Dendritic cell treated with granulocyte-macrophage colony-stimulating factor and Interleukin-4, amounts not matched to agents 40 ng/mL and 50 ng/mL, for 4 days (primary cell): ENCODE measurements at regions of chr2 and their contacts with region 1.

Region 1: DNA sequence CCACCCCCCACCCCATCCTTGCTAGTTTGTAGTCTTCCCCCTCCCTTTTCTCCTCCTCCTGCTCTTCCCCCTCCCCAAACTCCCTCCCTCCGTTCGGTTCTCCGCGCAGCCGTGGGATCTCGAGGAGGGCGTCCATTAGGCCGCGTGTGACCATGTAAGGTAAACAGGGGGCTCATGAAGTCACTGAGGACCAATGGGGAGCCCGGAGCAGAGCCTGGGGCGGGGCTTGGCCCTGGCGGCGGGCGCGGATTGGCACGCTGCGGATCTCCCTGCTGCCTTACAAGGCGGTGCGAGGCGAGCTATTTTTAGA is 246 bp upstream of the KLF7 start:
- H3K4me3 Mint-ChIP-seq: peak overlapping the region; percentile 98
- H3K27ac Mint-ChIP-seq: peak overlapping the region; percentile 99
- H3K4me1 Mint-ChIP-seq: peaks cover 55% of the 10 kb centered on the region
- H3K27me3 Mint-ChIP-seq: no peaks in the 10 kb centered on the region

Region 2: GRCh38 chr2:207012463-207012862 is 153.5 kb before region 1 on chr2:
- intact Hi-C with region 1: no loop called
- H3K4me3 Mint-ChIP-seq: no peak overlapping the region
- H3K27ac Mint-ChIP-seq: no peak overlapping the region
- H3K4me1 Mint-ChIP-seq: no peaks in the 10 kb centered on the region
- H3K27me3 Mint-ChIP-seq: no peaks in the 10 kb centered on the region

Region 3: DNA sequence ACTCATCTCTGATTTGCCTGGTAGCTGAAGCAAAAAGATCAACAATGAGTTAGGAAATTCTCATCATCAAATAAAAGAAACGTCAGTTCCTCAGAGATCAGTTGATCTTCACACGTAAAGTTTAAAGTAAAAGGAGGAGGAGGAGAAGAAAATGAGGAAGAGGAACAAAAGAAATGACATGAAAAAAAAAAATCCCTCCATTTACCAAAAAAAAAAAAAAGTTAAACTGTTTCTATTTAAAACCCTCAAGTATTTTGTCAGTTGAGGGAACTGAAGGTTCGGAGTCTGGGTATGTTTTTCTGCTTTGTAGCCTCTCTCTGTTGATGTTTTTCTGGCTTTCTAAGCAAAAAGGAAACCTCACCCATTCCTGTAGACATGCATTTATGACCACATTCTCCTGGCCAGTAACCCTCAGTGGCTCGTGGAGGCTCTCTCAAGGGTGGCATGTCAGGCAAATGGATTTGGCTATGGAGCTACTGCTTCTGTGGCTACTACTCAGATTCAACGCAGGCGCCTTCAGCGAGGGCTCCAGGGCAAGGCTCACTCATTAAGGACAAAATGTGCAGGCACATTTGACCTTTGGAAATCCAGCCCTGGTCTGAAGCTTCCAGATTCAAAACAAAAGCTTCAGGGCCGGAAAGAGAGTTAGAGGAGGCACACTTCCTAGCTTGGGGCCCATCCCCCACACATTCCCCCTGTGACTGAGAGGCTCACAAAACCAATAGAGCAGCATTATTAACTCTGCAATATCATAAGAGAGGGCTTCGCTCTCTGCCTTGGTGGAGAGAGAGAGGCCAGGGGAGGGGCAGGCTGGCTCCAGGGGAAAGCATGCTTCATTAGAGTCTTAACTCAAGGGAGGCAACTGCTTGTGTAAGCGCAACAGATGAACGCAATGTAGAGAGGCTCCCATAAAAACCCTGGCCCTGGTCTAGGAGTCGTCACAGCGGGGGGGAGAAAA is 22.5 kb before region 1 on chr2:
- intact Hi-C with region 1: loop called (anchors 1 kb)
- H3K4me3 Mint-ChIP-seq: peak overlapping the region; percentile 61
- H3K27ac Mint-ChIP-seq: peak overlapping the region; percentile 90
- H3K4me1 Mint-ChIP-seq: peaks cover 75% of the 10 kb centered on the region
- H3K27me3 Mint-ChIP-seq: no peaks in the 10 kb centered on the region

Region 4: GRCh38 chr2:207176247-207176646 is 10.3 kb after region 1 on chr2:
- intact Hi-C with region 1: loop called (anchors 1 kb)
- H3K4me3 Mint-ChIP-seq: no peak overlapping the region
- H3K27ac Mint-ChIP-seq: no peak overlapping the region
- H3K4me1 Mint-ChIP-seq: peaks cover 6% of the 10 kb centered on the region
- H3K27me3 Mint-ChIP-seq: no peaks in the 10 kb centered on the region

Region 5: DNA sequence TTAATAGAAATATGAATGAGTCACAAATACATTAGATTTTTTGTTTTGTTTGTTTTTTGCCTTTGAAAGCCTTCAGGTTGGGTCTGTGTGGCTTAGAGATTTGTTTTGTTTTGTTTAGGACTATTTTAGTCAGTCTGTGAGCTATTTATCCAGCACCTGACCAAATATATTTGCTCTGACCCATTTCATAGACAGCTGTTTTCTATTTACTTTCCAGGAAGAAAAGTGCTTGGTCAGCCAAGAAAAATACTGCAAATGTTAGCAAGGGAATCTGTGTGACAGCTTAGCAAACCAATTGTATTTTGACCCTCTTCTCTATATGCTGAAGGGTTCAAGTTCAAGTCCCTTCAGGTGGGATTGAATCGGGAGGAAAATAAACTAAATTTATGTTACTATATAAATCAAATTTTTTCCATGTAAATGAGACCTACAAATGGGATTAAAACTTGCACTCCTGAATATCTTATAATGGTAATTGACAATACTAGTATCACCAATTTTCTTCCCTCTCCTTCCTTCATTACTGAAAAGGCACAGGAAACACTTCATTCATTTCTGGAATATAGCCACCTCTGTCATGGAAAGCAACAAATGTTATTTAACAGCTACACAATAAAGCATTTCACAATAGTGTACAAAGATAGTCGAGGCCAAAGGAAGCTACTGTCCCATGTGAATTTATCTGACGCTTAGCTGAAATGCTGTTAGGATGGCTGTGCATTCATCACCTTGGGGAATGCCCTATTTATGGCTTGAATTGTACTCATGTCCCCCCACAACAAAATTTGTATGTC is 22.8 kb after region 1 on chr2:
- intact Hi-C with region 1: no loop called
- H3K4me3 Mint-ChIP-seq: no peak overlapping the region
- H3K27ac Mint-ChIP-seq: no peak overlapping the region
- H3K4me1 Mint-ChIP-seq: no peaks in the 10 kb centered on the region
- H3K27me3 Mint-ChIP-seq: peaks cover 2% of the 10 kb centered on the region

Region 6: GRCh38 chr2:207223051-207223450 is 57.1 kb after region 1 on chr2:
- intact Hi-C with region 1: loop called (anchors 10 kb)
- H3K4me3 Mint-ChIP-seq: no peak overlapping the region
- H3K27ac Mint-ChIP-seq: no peak overlapping the region
- H3K4me1 Mint-ChIP-seq: peaks cover 32% of the 10 kb centered on the region
- H3K27me3 Mint-ChIP-seq: peaks cover 5% of the 10 kb centered on the region